Stomach (tissue), 19 donors: ENCODE measurements at regions of chr3 and their contacts with region 1.

Region 1: GRCh38 chr3:127697551-127698240 is 24.9 kb downstream of the ABTB1 start:
- DNase-seq: peak; percentile 80 to 92
- H3K4me3 ChIP-seq: peak overlapping the region; percentile 16 to 36 (median 18)
- H3K27ac ChIP-seq: peak overlapping the region; percentile 68 to 91 (median 90)
- H3K4me1 ChIP-seq: peaks cover 37 to 72% (median 48%) of the 10 kb centered on the region in 4 donors
- H3K27me3 ChIP-seq: no peaks in the 10 kb centered on the region
- CTCF ChIP-seq: peak in 1 of 7 experiments; percentile 7
- EP300 ChIP-seq: peak; percentile 60
- POLR2A ChIP-seq: no peak

Region 2: DNA sequence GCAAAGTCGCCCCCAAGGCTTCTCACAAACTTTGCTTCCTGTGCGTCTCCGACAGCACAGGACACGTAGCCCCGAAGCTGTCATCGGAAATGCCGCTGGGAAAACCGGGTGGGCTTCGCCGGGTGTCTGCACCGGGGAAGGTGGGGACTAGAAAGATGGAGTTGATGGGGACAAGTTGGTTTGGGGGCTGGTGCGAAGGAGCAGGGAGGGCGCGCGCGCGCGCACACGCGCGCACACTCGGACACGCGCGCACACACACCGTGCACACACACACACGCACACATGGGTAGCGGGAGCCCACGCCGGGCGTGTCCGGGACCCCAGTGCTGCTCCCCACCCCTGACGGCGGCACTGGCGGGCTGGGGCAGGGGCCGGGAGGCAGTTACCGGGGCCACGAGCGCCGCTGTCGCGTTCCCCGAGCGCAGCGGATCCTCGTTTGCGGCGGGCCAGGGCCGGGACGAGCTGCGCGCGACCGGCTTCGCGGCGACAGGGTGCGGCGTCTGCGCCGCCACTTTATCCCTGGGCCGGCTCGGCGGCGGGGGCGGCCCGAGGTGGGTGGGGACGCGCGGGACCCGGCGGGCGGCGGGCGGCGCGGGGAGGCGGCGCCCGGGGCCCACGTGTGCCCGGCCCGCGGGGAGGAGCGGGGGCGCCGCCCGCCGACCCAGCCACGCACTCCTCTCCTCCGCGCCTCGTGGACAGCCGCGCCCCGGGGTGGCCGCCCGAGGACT is 125.2 kb after region 1 on chr3:
- intact Hi-C with region 1: loop called (anchors 10 kb)
- DNase-seq: peak; percentile 54 to 80
- H3K4me3 ChIP-seq: peak overlapping the region; percentile 76 to 86 (median 84)
- H3K27ac ChIP-seq: peak overlapping the region; percentile 77 to 90 (median 89)
- H3K4me1 ChIP-seq: peaks cover 19 to 54% (median 44%) of the 10 kb centered on the region in 4 donors
- H3K27me3 ChIP-seq: peaks cover 0 to 8% (median 0%) of the 10 kb centered on the region in 3 donors
- CTCF ChIP-seq: peak in 1 of 7 experiments; percentile 21
- EP300 ChIP-seq: no peak
- POLR2A ChIP-seq: no peak

Region 3: DNA sequence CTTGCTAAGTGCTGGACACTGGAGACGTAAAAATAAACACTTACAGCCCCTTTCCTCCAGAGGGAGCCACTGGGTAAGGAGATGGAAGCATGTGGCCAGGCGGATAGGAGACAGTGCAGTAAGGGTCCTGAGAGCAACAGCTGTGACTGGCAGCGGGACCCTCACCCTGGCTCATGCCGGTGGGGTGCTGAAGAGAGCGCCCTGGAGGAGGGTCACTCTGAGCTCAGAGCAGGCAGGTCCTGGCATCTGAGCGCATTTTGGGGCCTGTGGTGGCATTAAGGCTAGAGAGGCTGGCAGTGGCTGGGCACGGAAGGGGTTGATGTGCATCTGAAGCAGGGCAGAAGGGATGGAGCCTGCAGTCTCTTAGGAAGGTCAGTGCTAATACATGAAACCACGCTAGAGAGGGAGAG is 370.5 kb after region 1 on chr3:
- intact Hi-C with region 1: no loop called
- DNase-seq: peak in 1 of 2 donors; percentile 62
- H3K4me3 ChIP-seq: no peak overlapping the region
- H3K27ac ChIP-seq: no peak overlapping the region
- H3K4me1 ChIP-seq: peaks cover 0 to 16% (median 15%) of the 10 kb centered on the region in 4 donors
- H3K27me3 ChIP-seq: no peaks in the 10 kb centered on the region
- CTCF ChIP-seq: peak in 4 of 7 experiments; percentile 22 to 45 (median 36)
- EP300 ChIP-seq: no peak
- POLR2A ChIP-seq: no peak